Left cardiac atrium (tissue), 4 donors: ENCODE measurements at regions of chr18 and their contacts with region 1.

Region 1: GRCh38 chr18:35580701-35581539 is 620 bp upstream of the GALNT1 start:
- DNase-seq: peak; percentile 70
- ATAC-seq: peak; percentile 88 to 91

Region 2: GRCh38 chr18:35415511-35416073 is 165.3 kb before region 1 on chr18:
- intact Hi-C with region 1: loop called in 1 of 2 experiments (anchors 10 kb)
- DNase-seq: no peak
- ATAC-seq: peak in 1 of 2 donors; percentile 32

Region 3: GRCh38 chr18:35497370-35498197 is 83.3 kb before region 1 on chr18 and contains the start of gene INO80C:
- intact Hi-C with region 1: loop called in 1 of 2 experiments (anchors 5 kb)
- DNase-seq: peak; percentile 94
- ATAC-seq: peak; percentile 99
- total RNA-seq, gene INO80C: 22.9 to 23.5 TPM

Region 4: GRCh38 chr18:35513181-35513936 is 67.6 kb before region 1 on chr18:
- intact Hi-C with region 1: loop called in 1 of 2 experiments (anchors 10 kb)
- DNase-seq: peak; percentile 61
- ATAC-seq: peak; percentile 74 to 95

Region 5: GRCh38 chr18:35526476-35527120 is 54.3 kb before region 1 on chr18:
- intact Hi-C with region 1: loop called in 1 of 2 experiments (anchors 10 kb)
- DNase-seq: no peak
- ATAC-seq: peak; percentile 51 to 53

Region 6: DNA sequence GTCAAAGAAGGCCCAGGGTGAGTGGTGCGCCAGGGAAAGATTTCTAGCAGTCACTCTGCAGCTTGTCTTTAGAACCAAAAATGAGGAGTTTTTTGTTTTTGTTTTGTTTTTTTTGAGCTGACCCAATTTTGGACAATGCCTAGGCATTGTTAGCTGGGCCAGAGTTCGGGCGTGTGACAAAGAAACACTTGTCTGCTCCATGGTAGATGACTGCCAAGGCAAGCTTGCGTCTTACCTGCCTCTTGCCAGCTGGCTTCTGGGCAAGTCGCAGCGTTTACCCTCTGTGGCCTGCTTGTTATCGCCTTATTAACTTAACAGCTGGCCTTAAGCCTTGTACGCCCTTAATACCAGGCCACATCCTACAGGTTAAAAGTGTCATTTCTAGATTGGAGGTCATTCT is 114.9 kb after region 1 on chr18:
- intact Hi-C with region 1: loop called in 1 of 2 experiments (anchors 5 kb)
- DNase-seq: peak; percentile 74
- ATAC-seq: peak; percentile 93 to 95